Activated CD4-positive, alpha-beta T cell treated with anti-CD3 and anti-CD28 coated beads for 36 hours (primary cell): ENCODE measurements at regions of chr12 and their contacts with region 1.

Region 1: DNA sequence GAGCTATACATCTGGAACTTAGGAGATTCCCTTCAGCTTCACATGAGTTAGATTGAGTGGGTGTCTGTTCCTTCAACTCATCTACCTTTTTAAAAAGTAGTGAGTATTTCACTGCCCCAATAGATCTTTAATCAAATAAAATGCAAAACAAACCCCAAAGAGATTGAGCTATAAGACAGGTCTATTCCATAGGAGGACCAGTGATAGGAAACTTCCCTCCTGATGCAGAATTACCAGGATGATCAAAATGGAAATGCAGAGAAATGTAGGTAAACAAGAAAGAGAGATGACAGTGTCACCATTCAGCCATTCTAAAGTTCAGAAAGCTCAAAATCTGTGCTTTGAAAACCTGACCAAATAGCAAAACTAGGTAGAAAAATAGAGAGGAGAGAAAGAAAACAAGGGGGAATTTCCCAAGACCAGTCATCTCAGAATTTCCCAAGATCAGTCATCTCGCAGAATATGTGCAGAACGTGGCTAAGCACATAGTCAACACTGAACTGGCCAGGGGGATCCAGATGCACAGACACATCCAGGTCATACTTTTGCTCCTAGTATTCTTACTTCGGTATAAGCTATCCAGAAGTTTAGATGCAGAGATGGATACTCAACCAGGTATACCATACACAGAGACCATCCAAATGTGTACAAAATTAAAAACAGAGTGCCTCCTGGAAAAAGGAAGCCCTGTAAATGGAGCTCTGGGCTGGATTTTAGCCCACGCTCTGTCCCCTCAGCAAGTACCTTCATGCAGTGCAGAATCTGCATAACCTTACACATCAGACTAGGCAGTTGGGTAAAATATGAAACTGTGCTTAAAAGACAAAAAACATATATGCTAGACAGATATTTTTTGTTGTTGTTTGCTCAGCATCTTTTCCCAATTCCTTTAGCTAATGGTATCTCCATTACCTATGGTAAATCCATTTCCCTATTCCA is 27.4 kb downstream of the SLC41A2 start:
- DNase-seq: peak; percentile 73
- ATAC-seq: peak; percentile 98
- H3K4me3 Mint-ChIP-seq: peak overlapping the region; percentile 30
- H3K27ac Mint-ChIP-seq: peak overlapping the region; percentile 77
- H3K4me1 Mint-ChIP-seq: peaks cover 29% of the 10 kb centered on the region
- H3K27me3 Mint-ChIP-seq: peaks cover 1% of the 10 kb centered on the region

Region 2: DNA sequence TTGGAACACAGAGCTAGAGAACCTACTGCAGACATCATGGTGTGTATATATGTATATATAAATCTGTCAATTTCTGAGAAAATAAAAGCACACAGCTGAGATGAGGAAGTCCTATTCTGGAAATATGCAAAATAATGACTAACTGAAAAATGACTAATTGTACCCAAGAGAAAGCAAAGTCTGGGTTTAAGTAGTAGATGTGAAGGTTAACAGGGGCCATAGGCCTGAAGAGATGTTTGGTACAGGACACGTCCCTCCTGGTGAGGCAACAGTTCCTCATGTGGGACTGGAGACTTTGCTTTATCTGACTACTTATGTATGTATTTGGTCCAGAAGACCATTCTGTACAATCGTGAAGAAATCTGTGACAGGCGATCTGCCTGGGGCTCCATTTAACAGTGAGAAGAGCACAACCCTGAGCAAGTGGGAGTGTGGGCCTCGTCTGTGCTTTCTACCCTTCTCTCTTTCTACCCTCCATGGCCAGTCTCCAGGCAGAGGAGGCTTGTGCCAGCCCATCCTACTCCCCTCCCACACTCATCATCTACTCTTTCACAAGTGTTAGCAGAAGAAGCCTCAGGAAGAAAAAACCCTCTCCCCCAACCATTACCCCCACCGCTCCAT is 40.1 kb before region 1 on chr12:
- CTCF ChIA-PET with region 1: no interaction called
- POLR2A ChIA-PET with region 1: no interaction called
- intact Hi-C with region 1: loop called in 1 of 2 experiments (anchors 2 kb)
- DNase-seq: peak; percentile 26
- ATAC-seq: peak; percentile 95
- H3K4me3 Mint-ChIP-seq: no peak overlapping the region
- H3K27ac Mint-ChIP-seq: peak overlapping the region; percentile 84
- H3K4me1 Mint-ChIP-seq: peaks cover 14% of the 10 kb centered on the region
- H3K27me3 Mint-ChIP-seq: no peaks in the 10 kb centered on the region

Region 3: DNA sequence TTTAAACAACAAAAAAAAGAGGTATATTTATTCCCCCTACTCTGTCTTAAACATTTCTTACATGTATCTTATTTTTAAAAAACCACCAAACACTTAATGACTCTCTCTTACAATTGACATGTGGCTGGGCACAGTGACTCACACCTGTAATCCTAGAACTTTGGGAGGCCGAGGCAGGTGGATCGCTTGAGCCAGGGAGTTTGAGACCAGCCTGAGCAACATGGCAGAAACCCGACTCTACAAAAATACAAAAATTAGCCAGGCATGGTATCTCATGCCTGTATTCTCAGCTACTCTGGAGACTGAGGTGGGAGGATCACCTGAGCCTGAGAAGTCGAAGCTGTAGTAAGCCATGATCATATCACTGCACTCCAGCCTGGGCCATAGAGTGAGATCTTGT is 11.4 kb after region 1 on chr12:
- CTCF ChIA-PET with region 1: interaction called, 16 read pairs
- POLR2A ChIA-PET with region 1: no interaction called
- intact Hi-C with region 1: no loop called
- DNase-seq: no peak
- ATAC-seq: no peak
- H3K4me3 Mint-ChIP-seq: no peak overlapping the region
- H3K27ac Mint-ChIP-seq: no peak overlapping the region
- H3K4me1 Mint-ChIP-seq: no peaks in the 10 kb centered on the region
- H3K27me3 Mint-ChIP-seq: peaks cover 4% of the 10 kb centered on the region

Region 4: GRCh38 chr12:105041186-105041585 is 110.5 kb after region 1 on chr12:
- CTCF ChIA-PET with region 1: no interaction called
- POLR2A ChIA-PET with region 1: no interaction called
- intact Hi-C with region 1: no loop called
- DNase-seq: no peak
- ATAC-seq: no peak
- H3K4me3 Mint-ChIP-seq: no peak overlapping the region
- H3K27ac Mint-ChIP-seq: no peak overlapping the region
- H3K4me1 Mint-ChIP-seq: peaks cover 18% of the 10 kb centered on the region
- H3K27me3 Mint-ChIP-seq: no peaks in the 10 kb centered on the region

Region 5: DNA sequence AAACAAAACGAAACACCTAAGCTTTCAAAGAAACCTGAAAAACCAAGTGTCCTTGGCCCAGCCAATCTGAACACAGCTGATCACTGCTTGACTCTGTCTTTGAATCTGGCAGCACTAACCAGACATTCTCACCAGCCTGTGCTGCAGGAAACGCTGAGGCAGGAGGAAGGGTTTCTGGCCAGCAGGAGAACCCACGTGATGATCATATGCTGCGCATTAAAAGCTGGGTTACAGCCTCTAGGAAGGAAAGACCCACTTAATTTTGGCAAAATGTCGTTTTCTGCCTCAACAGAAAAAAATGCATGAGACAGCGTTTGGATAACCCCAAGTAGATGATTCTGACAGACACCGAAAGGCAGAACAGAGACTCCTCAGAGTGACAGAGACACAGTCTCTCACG is 295.6 kb after region 1 on chr12:
- CTCF ChIA-PET with region 1: no interaction called
- POLR2A ChIA-PET with region 1: no interaction called
- intact Hi-C with region 1: loop called in 1 of 2 experiments (anchors 2 kb)
- DNase-seq: peak; percentile 49
- ATAC-seq: peak; percentile 69
- H3K4me3 Mint-ChIP-seq: no peak overlapping the region
- H3K27ac Mint-ChIP-seq: no peak overlapping the region
- H3K4me1 Mint-ChIP-seq: peaks cover 61% of the 10 kb centered on the region
- H3K27me3 Mint-ChIP-seq: no peaks in the 10 kb centered on the region